Activated CD4-positive, alpha-beta memory T cell treated with anti-CD3 and anti-CD28 coated beads for 36 hours (primary cell): ENCODE measurements at regions of chr1 and their contacts with region 1.

Region 1: DNA sequence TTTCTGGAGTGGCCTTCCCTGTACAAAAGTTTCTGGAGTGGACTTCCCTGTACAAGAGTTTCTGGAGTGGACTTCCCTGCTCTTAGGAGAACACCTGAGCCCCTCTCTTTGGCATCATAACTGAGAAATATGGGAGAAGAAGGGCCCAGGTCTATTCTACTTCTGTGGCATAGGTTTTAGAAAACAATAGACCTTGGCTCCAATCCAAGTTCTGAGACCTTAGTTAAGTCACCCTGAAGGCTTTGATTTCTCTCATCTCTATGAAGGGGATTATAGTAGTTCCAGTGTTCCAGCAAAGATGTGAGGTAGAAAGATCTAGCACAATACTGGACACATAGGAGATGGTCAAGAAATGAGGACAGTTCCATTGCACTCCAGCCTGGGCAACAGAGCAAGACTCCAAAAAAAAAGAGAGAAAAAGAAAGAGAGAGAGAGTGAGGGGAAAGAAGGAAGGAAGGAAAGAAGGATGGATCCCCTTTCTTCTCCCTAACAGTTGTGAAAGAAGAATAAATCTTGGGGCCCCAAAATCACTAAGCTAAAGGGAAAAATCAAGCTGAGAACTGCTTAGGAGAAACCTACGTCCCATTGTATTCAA is 13.3 kb upstream of the EIF4G3 start:
- DNase-seq: no peak
- H3K4me3 Mint-ChIP-seq: no peak overlapping the region
- H3K27ac Mint-ChIP-seq: no peak overlapping the region
- H3K4me1 Mint-ChIP-seq: no peaks in the 10 kb centered on the region
- H3K27me3 Mint-ChIP-seq: peaks cover 5% of the 10 kb centered on the region

Region 2: DNA sequence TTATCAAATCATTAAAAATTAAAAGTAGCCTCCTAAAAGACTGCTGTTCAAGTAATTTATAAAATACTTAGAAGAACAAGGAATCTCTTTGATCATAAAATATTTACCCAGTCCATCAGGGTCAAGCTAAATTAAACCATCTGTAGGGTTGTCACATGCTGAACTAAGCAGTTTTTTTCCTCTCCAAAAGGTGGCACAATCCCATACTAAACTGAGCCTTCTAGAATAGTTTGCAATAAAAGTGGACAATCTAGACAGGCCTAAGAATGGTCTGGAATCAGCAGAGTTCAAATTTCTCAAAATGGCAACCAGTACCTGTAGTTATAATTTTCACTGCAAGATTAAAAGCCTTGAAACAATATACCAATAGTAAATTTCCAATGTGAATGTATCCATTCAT is 208.1 kb before region 1 on chr1:
- CTCF ChIA-PET with region 1: interaction called, 13 read pairs
- POLR2A ChIA-PET with region 1: no interaction called
- intact Hi-C with region 1: loop called (anchors 10 kb)
- DNase-seq: no peak
- H3K4me3 Mint-ChIP-seq: no peak overlapping the region
- H3K27ac Mint-ChIP-seq: no peak overlapping the region
- H3K4me1 Mint-ChIP-seq: no peaks in the 10 kb centered on the region
- H3K27me3 Mint-ChIP-seq: no peaks in the 10 kb centered on the region